Calu3 (cell line): ENCODE measurements at regions of chr3 and their contacts with region 1.

Region 1: GRCh38 chr3:112734718-112735350 is 93.9 kb upstream of the CCDC80 start:
- DNase-seq: peak; percentile 78
- H3K4me3 Mint-ChIP-seq: no peak overlapping the region
- H3K27ac Mint-ChIP-seq: no peak overlapping the region
- H3K4me1 Mint-ChIP-seq: peaks cover 11% of the 10 kb centered on the region
- H3K27me3 Mint-ChIP-seq: no peaks in the 10 kb centered on the region
- CTCF ChIP-seq: peak; percentile 72

Region 2: DNA sequence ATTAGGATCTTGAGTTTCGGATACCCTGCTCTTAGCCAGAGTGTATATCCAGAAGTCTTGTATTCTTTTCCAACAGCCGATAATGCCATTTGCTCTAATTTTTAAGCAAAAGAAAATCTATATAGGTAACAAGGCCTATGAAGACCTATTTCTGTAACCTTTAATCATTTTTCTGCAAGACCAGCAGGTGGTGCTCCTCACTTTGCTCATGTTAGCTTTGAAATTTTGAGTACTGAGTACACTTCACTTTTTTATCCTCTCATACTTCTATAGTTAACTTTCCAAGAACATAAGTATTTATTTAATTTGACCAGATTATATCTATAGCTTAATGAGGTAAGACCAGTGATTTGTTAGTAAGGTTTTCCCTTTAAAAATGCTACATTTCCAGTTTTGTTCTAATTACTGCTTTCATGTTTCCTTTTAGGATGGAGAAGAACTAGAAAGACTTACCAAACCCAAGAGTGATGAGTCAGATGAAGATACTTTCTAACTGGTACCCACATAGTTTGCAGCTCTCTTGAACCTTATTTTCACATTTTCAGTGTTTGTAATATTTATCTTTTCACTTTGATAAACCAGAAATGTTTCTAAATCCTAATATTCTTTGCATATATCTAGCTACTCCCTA is 152.5 kb before region 1 on chr3:
- CTCF ChIA-PET with region 1: no interaction called
- intact Hi-C with region 1: loop called (anchors 5 kb)
- DNase-seq: peak; percentile 40
- H3K4me3 Mint-ChIP-seq: no peak overlapping the region
- H3K27ac Mint-ChIP-seq: no peak overlapping the region
- H3K4me1 Mint-ChIP-seq: no peaks in the 10 kb centered on the region
- H3K27me3 Mint-ChIP-seq: no peaks in the 10 kb centered on the region
- CTCF ChIP-seq: peak; percentile 20

Region 3: DNA sequence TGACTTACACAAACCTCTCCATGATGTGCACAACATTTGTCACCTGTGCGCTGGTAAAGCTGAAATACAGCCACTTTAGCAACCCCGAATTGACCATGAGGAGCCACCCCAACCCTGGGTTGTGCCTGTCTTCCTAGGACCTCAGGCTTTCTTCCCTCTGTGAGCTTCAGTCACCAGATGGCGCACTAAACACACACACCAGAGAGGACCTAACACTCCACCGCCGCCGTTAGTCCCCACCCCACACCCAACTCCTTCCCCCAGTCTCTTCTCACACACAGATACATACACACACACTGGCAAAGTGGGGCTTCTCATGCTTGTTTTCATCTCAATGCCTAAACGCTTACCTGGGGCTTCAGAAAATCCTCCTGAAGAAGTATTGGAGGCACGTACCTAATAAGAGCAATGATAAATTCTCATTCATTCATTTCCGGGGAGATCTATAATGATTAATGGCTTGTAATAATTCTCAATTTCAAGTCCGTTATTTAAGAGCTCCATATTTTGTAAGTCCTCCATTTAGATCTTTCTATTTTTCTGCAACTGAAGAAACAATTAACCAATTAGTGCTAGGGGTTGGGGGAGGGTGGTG is 91.8 kb before region 1 on chr3:
- CTCF ChIA-PET with region 1: interaction called, 11 read pairs
- intact Hi-C with region 1: loop called (anchors 2 kb)
- DNase-seq: peak; percentile 82
- H3K4me3 Mint-ChIP-seq: peak overlapping the region; percentile 31
- H3K27ac Mint-ChIP-seq: no peak overlapping the region
- H3K4me1 Mint-ChIP-seq: peaks cover 37% of the 10 kb centered on the region
- H3K27me3 Mint-ChIP-seq: no peaks in the 10 kb centered on the region
- CTCF ChIP-seq: no peak

Region 4: DNA sequence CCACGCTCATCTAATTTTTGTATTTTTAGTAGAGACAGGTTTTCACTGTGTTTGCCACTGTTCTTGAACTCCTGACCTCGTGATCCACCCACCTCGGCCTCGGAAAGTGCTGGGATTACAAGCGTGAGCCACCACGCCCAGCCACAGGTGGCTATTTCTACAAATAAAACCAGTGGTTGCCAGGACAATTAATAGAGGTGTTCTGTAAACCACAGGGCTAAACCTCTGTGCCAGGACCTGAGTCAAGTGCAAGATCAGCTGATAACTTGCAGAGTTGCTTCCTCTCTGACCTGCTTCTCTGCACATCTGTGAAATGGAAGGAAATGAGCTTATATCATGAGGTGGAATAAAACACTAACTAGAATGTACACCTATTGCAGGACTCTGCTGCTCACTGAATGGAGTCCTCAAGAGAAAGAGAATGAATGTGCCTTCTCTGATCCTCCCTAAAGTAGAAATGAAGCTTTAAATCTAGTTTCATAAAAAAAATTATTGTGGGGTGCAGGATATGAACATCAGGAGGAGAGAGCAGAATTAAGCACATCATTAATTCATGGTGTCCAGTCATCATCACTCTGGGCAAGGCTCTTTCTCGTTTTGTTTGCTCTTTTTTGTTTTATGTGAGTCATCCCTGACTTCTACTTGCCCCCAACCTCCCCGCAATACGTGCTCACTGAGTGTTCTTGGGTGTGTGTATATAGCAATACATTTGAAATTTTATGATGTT is 39.2 kb after region 1 on chr3:
- CTCF ChIA-PET with region 1: interaction called, 9 read pairs
- intact Hi-C with region 1: loop called (anchors 5 kb)
- DNase-seq: peak; percentile 73
- H3K4me3 Mint-ChIP-seq: peak overlapping the region; percentile 20
- H3K27ac Mint-ChIP-seq: peak overlapping the region; percentile 90
- H3K4me1 Mint-ChIP-seq: peaks cover 29% of the 10 kb centered on the region
- H3K27me3 Mint-ChIP-seq: no peaks in the 10 kb centered on the region
- CTCF ChIP-seq: no peak

Region 5: DNA sequence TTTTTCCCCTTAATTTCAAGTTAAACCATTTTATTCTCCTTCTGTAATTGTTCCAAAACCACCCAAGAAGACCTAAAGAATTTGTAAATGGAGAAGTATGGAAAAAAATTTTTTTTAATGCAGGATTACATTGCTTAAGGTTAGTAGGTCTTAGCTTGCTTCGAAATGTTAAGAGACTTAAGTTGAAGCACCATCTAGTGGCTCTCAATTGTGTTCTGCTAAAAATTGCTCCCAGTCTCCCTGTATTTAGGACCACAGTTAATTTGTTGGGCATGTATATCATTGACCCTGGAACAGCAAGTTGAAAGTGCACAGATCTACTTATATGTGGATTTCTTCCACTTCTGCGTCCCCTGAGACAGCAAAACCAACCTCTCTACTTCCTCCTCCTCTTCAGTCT is 79.4 kb after region 1 on chr3:
- CTCF ChIA-PET with region 1: interaction called, 63 read pairs
- intact Hi-C with region 1: loop called (anchors 1 kb)
- DNase-seq: no peak
- H3K4me3 Mint-ChIP-seq: no peak overlapping the region
- H3K27ac Mint-ChIP-seq: no peak overlapping the region
- H3K4me1 Mint-ChIP-seq: peaks cover 11% of the 10 kb centered on the region
- H3K27me3 Mint-ChIP-seq: no peaks in the 10 kb centered on the region
- CTCF ChIP-seq: no peak

Region 6: DNA sequence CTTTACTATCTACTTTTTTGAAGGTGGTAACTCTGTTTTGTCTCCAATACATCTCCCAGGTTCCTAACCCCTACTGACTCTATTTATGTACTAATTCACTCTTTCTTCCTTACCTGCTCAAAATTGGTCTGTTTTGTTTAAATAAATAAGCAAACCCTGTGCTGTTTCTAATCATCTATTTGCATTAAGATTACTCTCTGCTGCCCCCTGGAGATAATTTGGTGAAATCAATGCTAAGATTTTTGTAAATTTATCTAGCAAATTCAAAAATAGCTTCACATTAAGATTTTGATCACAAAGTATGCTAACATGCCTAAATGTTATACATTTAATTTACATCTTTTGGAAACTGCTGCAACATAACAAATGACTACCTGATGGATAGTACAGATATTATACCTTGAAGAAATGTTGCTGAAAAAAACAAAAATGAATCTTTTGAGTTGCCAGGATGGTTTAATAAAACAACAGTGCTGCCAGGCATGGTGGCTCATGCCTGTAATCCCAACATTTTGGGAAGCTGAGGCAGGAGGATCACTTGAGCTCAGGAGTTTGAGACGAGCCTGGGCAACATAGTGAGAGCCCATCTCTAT is 244.5 kb after region 1 on chr3:
- CTCF ChIA-PET with region 1: interaction called, 11 read pairs
- intact Hi-C with region 1: loop called (anchors 1 kb)
- DNase-seq: peak; percentile 4
- H3K4me3 Mint-ChIP-seq: no peak overlapping the region
- H3K27ac Mint-ChIP-seq: no peak overlapping the region
- H3K4me1 Mint-ChIP-seq: no peaks in the 10 kb centered on the region
- H3K27me3 Mint-ChIP-seq: no peaks in the 10 kb centered on the region
- CTCF ChIP-seq: peak; percentile 42